ENCODE measurements at regions of chr20 and their contacts with region 1.

Region 1: GRCh38 chr20:20083807-20084206 is 31.5 kb downstream of the CFAP61 start:
- DNase-seq: peak in 1 of 2 experiments; percentile 64
- H3K4me3 ChIP-seq: no peak overlapping the region
- H3K4me1 ChIP-seq: no peaks in the 10 kb centered on the region
- H3K27me3 ChIP-seq: peaks cover 8% of the 10 kb centered on the region; the same call in 1 of the 2 replicates

Region 2: GRCh38 chr20:19921284-19921793 is 162.5 kb before region 1 on chr20:
- in situ Hi-C with region 1: no loop called
- DNase-seq: no peak
- H3K4me3 ChIP-seq: no peak overlapping the region
- H3K4me1 ChIP-seq: no peaks in the 10 kb centered on the region
- H3K27me3 ChIP-seq: no peaks in the 10 kb centered on the region

Region 3: GRCh38 chr20:20237093-20237959 is 153.5 kb after region 1 on chr20:
- in situ Hi-C with region 1: loop called (anchors 5 kb)
- DNase-seq: peak; percentile 56 to 65
- H3K4me3 ChIP-seq: no peak overlapping the region
- H3K4me1 ChIP-seq: no peaks in the 10 kb centered on the region
- H3K27me3 ChIP-seq: no peaks in the 10 kb centered on the region

Region 4: DNA sequence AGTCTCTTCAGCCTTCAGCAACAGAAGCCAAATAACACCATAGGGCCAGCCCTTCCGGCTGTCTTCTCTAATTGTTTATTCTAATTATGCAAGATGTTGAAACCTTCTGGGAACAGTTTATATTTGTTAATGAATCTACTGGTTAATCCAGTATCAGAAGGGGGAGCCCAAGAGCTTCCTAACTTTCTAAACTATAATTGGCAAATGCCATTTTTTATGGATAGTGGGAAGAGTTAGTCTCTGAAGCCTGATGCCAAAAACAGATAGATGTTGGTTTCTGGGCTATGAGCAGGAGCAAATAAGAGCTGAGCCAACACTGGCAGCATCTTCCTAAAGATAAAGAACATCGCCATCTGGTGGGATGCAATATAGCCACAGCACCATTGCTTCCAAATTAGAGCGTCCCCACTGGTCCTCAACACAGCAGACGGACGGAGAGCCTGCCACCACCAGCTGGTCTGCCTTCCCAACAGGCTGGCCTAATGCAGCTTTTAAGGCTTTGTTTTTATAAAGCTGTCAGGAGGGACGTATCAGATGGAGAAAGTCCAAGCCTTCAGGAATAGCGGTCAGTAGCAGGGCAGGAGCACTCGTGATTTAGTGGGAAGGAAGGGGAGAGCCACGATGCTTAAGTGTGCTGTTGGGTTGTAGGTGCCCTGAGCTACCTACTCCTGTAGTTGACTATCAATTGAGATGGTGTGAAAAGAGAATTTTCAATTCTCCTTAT is 509.8 kb after region 1 on chr20:
- in situ Hi-C with region 1: loop called (anchors 10 kb)
- DNase-seq: peak; percentile 42 to 56
- H3K4me3 ChIP-seq: no peak overlapping the region
- H3K4me1 ChIP-seq: no peaks in the 10 kb centered on the region
- H3K27me3 ChIP-seq: no peaks in the 10 kb centered on the region